Aorta (tissue), 5 donors: ENCODE measurements at regions of chr4 and their contacts with region 1.

Region 1: GRCh38 chr4:48016141-48017103 is at the starts of genes CNGA1 and NIPAL1:
- DNase-seq: peak; percentile 79 to 90
- ATAC-seq: peak; percentile 92
- H3K4me3 ChIP-seq: peak within 1 kb of the TSS; percentile 51
- H3K27ac ChIP-seq: no peak within 1 kb of the TSS
- H3K4me1 ChIP-seq: no peaks in the 10 kb centered on the region
- H3K27me3 ChIP-seq: no peaks in the 10 kb centered on the region
- total RNA-seq, gene CNGA1: 1.6 to 5.5 TPM
- total RNA-seq, gene NIPAL1: 0.81 to 1.1 TPM

Region 2: DNA sequence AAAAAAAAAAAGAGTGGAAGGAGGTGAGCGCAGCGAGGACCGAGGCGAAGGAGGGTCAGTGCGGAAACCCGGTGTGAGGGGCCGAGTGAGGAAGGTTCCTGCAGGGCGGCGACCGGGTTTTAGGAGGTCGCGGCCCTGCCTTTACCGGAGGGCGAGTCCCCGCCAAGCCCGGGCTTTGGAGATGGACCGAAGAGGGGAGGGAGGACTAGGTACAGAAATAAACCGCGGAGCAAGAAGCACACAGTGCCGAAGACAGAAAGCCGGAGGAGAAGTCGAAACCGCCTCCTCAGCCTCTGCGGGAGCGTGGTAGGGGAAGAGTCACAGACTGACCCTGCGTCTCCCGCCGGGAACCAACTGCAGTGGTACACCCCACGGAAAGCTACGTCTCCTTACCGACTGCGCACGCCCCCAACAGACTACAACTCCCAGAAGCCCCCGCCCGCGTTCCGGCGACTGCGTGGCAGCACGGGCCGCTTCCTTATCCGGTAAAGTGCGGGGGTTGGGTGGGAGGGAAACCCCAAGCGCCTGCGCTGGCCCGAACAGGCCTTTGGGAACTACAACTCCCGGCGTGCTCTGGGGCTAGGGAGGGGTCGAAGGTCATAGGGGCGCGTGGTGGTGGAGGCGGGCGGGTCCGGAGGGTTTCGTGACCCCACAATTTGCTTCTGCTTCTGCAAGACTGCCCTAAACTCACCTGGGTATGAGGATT is 102.0 kb before region 1 on chr4 and contains the start of gene NFXL1:
- intact Hi-C with region 1: loop called in 1 of 2 experiments (anchors 10 kb)
- DNase-seq: peak; percentile 99
- ATAC-seq: peak; percentile 100
- H3K4me3 ChIP-seq: peak within 1 kb of the TSS; percentile 85 to 92
- H3K27ac ChIP-seq: peak within 1 kb of the TSS in 1 of 2 donors; percentile 15
- H3K4me1 ChIP-seq: no peaks in the 10 kb centered on the region
- H3K27me3 ChIP-seq: no peaks in the 10 kb centered on the region
- total RNA-seq, gene NFXL1: 13.7 to 16.7 TPM